Prostate gland (tissue), 2 donors: ENCODE measurements at regions of chr6 and their contacts with region 1.

Region 1: GRCh38 chr6:83417880-83418663 is 12.8 kb downstream of the ME1 start:
- DNase-seq: no peak
- H3K4me3 ChIP-seq: no peak overlapping the region
- H3K27ac ChIP-seq: no peak overlapping the region
- H3K4me1 ChIP-seq: no peaks in the 10 kb centered on the region
- H3K27me3 ChIP-seq: no peaks in the 10 kb centered on the region
- CTCF ChIP-seq: peak in 3 of 4 experiments; percentile 54 to 83 (median 68)
- POLR2A ChIP-seq: no peak

Region 2: GRCh38 chr6:83378621-83379388 is 39.3 kb before region 1 on chr6:
- intact Hi-C with region 1: no loop called
- DNase-seq: no peak
- H3K4me3 ChIP-seq: no peak overlapping the region
- H3K27ac ChIP-seq: no peak overlapping the region
- H3K4me1 ChIP-seq: no peaks in the 10 kb centered on the region
- H3K27me3 ChIP-seq: no peaks in the 10 kb centered on the region
- CTCF ChIP-seq: no peak
- POLR2A ChIP-seq: no peak

Region 3: GRCh38 chr6:83514866-83515466 is 96.9 kb after region 1 on chr6:
- intact Hi-C with region 1: loop called (anchors 2 kb)
- DNase-seq: peak; percentile 23
- H3K4me3 ChIP-seq: no peak overlapping the region
- H3K27ac ChIP-seq: no peak overlapping the region
- H3K4me1 ChIP-seq: no peaks in the 10 kb centered on the region
- H3K27me3 ChIP-seq: no peaks in the 10 kb centered on the region
- CTCF ChIP-seq: peak; percentile 75 to 84 (median 80)
- POLR2A ChIP-seq: no peak